Activated naive CD4-positive, alpha-beta T cell treated with anti-CD3 and anti-CD28 coated beads for 36 hours (primary cell): ENCODE measurements at regions of chr12 and their contacts with region 1.

Region 1: DNA sequence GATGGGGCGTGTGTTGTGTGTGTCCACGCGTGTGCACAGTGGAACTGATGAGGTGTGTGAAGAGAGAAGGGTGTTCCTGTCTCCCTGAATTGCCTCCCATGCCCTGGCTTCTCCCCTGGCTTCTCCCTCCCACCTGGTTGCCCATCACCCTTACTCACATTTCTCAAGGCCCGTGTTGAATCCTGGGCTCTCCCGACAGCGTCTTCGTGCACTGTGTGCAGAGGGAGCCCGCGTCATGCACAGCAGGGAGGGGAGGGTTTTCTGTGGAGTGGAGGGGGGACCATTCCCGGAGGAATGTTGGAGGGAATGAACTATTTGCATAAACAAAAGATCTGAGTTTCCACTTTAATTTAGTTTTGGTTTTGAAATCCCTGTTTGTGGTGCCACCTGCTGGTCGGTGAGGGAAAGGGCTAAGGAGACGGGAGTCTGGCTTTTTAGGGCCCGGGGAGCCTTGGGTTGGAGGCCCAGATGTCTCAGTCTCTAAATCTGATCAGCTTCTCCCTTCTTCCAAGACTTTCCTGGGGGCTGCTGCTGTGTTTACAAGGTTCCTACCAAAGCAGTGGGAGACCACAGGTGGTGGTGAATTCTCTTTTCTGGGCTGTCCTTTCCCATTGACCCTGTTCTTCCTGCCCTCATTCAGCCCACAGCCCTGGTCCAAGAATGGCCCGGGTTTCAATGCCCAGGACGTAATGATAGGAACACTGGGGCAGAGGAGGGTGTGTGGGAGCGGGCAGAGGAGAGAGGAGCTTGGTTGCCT is at the start of gene C1R:
- DNase-seq: peak; percentile 83
- H3K4me3 Mint-ChIP-seq: peak within 1 kb of the TSS; percentile 73
- H3K27ac Mint-ChIP-seq: peak within 1 kb of the TSS; percentile 22
- H3K4me1 Mint-ChIP-seq: peaks cover 7% of the 10 kb centered on the region
- H3K27me3 Mint-ChIP-seq: no peaks in the 10 kb centered on the region
- total RNA-seq, gene C1R: 1.4 to 1.5 TPM

Region 2: GRCh38 chr12:6867413-6868210 is 224.8 kb before region 1 on chr12 and contains the start of gene TPI1:
- CTCF ChIA-PET with region 1: no interaction called
- intact Hi-C with region 1: loop called (anchors 2 kb)
- DNase-seq: peak; percentile 79
- H3K4me3 Mint-ChIP-seq: peak within 1 kb of the TSS; percentile 98
- H3K27ac Mint-ChIP-seq: peak within 1 kb of the TSS; percentile 94
- H3K4me1 Mint-ChIP-seq: peaks cover 52% of the 10 kb centered on the region
- H3K27me3 Mint-ChIP-seq: no peaks in the 10 kb centered on the region
- total RNA-seq, gene TPI1: 1,222 to 1,282 TPM

Region 3: GRCh38 chr12:6965026-6965661 is 127.3 kb before region 1 on chr12:
- CTCF ChIA-PET with region 1: no interaction called
- intact Hi-C with region 1: loop called (anchors 2 kb)
- DNase-seq: peak; percentile 95
- H3K4me3 Mint-ChIP-seq: no peak overlapping the region
- H3K27ac Mint-ChIP-seq: peak overlapping the region; percentile 93
- H3K4me1 Mint-ChIP-seq: peaks cover 81% of the 10 kb centered on the region
- H3K27me3 Mint-ChIP-seq: no peaks in the 10 kb centered on the region

Region 4: DNA sequence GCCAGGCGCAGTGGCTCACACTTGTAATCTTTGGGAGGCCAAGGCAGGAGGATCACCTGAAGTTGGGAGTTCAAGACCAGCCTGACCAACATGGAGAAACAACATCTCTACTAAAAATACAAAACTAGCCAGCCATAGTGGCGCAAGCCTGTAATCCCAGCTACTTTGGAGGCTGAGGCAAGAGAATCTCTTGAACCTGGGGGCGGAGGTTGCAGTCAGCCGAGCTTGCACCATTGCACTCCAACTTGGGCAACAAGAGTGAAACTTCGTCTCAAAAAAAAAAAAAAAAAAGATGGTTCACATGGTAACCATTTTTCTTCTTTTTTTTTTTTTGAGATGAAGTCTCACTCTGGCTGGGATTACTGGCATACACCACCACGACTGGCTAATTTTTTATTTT is 745.0 kb after region 1 on chr12:
- CTCF ChIA-PET with region 1: no interaction called
- intact Hi-C with region 1: no loop called
- DNase-seq: no peak
- H3K4me3 Mint-ChIP-seq: no peak overlapping the region
- H3K27ac Mint-ChIP-seq: no peak overlapping the region
- H3K4me1 Mint-ChIP-seq: no peaks in the 10 kb centered on the region
- H3K27me3 Mint-ChIP-seq: no peaks in the 10 kb centered on the region